Sciatic nerve (tissue), 2 donors: ENCODE measurements at regions of chr10 and their contacts with region 1.

Region 1: GRCh38 chr10:34985823-34986222 is 104.3 kb downstream of the CUL2 start:
- DNase-seq: no peak
- ATAC-seq: no peak

Region 2: DNA sequence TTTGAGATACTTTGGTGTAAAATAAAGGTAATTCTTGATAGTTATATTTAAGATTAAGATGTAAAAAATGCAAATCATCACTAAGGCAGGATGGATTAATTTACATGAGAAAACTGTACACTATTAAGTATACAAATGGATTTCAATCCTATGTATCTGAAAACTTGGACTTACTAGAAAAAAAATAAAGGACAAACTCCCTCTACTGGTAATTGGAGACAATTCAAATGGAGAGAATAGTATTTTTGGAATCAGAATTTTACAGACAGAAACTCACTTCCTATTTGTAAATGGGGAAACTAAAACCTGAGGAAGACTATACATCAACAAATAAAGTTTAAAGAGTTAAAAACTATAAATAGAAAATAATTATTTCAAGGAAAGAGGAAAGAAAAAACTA is 41.7 kb after region 1 on chr10:
- intact Hi-C with region 1: loop called (anchors 5 kb)
- DNase-seq: no peak
- ATAC-seq: no peak